Ascending aorta (tissue), 2 donors: ENCODE measurements at regions of chr16 and their contacts with region 1.

Region 1: GRCh38 chr16:70380861-70381603 is 34.3 kb downstream of the DDX19A start:
- DNase-seq: peak; percentile 87 to 98
- H3K4me3 ChIP-seq: peak overlapping the region; percentile 63 to 90
- H3K27ac ChIP-seq: peak overlapping the region; percentile 71 to 77
- H3K4me1 ChIP-seq: peaks cover 0 to 10% of the 10 kb centered on the region in 2 donors
- H3K27me3 ChIP-seq: no peaks in the 10 kb centered on the region
- CTCF ChIP-seq: peak in 2 of 3 experiments; percentile 24 to 32

Region 2: GRCh38 chr16:70342016-70342415 is 39.0 kb before region 1 on chr16:
- intact Hi-C with region 1: loop called (anchors 2 kb)
- DNase-seq: no peak
- H3K4me3 ChIP-seq: no peak overlapping the region
- H3K27ac ChIP-seq: no peak overlapping the region
- H3K4me1 ChIP-seq: peaks cover 0 to 3% of the 10 kb centered on the region in 2 donors
- H3K27me3 ChIP-seq: no peaks in the 10 kb centered on the region
- CTCF ChIP-seq: no peak

Region 3: GRCh38 chr16:70438969-70439862 is 58.2 kb after region 1 on chr16 and contains the start of gene ST3GAL2:
- intact Hi-C with region 1: loop called (anchors 1 kb)
- DNase-seq: peak; percentile 85 to 97
- H3K4me3 ChIP-seq: peak within 1 kb of the TSS; percentile 95 to 97
- H3K27ac ChIP-seq: peak within 1 kb of the TSS; percentile 67 to 76
- H3K4me1 ChIP-seq: peaks cover 0 to 20% of the 10 kb centered on the region in 2 donors
- H3K27me3 ChIP-seq: no peaks in the 10 kb centered on the region
- CTCF ChIP-seq: peak in 2 of 3 experiments; percentile 23 to 28
- total RNA-seq, gene ST3GAL2: 52.3 TPM

Region 4: GRCh38 chr16:70454222-70455034 is 73.4 kb after region 1 on chr16 and contains the start of gene FCSK:
- intact Hi-C with region 1: loop called (anchors 1 kb)
- DNase-seq: peak in 1 of 2 donors; percentile 75
- H3K4me3 ChIP-seq: peak within 1 kb of the TSS; percentile 87 to 97
- H3K27ac ChIP-seq: peak within 1 kb of the TSS; percentile 85 to 94
- H3K4me1 ChIP-seq: peaks cover 0 to 6% of the 10 kb centered on the region in 2 donors
- H3K27me3 ChIP-seq: no peaks in the 10 kb centered on the region
- CTCF ChIP-seq: no peak
- total RNA-seq, gene FCSK: 54.5 TPM

Region 5: GRCh38 chr16:70653809-70654771 is 273.1 kb after region 1 on chr16:
- intact Hi-C with region 1: loop called (anchors 10 kb)
- DNase-seq: peak in 1 of 2 donors; percentile 93
- H3K4me3 ChIP-seq: peak overlapping the region in 1 of 2 donors; percentile 40
- H3K27ac ChIP-seq: peak overlapping the region; percentile 12 to 41
- H3K4me1 ChIP-seq: peaks cover 0 to 4% of the 10 kb centered on the region in 2 donors
- H3K27me3 ChIP-seq: no peaks in the 10 kb centered on the region
- CTCF ChIP-seq: peak; percentile 80 to 94 (median 92)